IMR-90 (cell line): ENCODE measurements at regions of chr5 and their contacts with region 1.

Region 1: DNA sequence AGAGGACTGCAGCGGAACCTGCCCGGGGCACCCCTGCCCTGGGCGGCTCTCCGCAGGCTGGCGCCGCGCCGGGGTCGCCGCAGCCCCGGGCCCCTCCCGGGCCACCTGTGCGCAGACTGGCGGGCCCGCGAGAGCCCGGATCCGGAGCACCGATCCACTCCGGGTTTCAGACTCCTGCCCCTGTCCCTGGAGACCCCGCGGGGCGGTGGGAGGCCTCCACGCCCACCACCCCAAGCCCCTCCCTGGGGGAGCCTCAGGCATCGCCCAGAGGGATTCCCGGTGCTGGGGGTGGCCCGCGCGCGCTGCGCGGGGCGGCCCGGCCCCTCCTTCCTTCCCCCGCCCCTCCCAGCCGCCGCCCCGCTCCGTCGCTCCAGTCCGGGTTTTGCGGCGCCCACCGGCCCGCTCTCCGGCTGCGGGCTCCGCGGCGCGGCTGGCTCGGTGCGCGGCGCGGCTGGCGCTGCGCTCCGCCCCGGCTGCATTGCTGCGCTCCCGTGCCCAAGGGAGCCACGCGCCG is at the start of gene UNC5A:
- DNase-seq: peak; percentile 17
- ATAC-seq: peak; percentile 77
- H3K4me3 ChIP-seq: no peak within 1 kb of the TSS; the same call in 1 of the 2 replicates
- H3K27ac ChIP-seq: no peak within 1 kb of the TSS
- H3K4me1 ChIP-seq: no peaks in the 10 kb centered on the region; the same call in 1 of the 2 replicates
- H3K27me3 ChIP-seq: peaks cover 63% of the 10 kb centered on the region
- CTCF ChIP-seq: no peak
- POLR2A ChIP-seq: no peak
- RAD21 ChIP-seq: no peak
- total RNA-seq, gene UNC5A: not detected in 2 replicates

Region 2: DNA sequence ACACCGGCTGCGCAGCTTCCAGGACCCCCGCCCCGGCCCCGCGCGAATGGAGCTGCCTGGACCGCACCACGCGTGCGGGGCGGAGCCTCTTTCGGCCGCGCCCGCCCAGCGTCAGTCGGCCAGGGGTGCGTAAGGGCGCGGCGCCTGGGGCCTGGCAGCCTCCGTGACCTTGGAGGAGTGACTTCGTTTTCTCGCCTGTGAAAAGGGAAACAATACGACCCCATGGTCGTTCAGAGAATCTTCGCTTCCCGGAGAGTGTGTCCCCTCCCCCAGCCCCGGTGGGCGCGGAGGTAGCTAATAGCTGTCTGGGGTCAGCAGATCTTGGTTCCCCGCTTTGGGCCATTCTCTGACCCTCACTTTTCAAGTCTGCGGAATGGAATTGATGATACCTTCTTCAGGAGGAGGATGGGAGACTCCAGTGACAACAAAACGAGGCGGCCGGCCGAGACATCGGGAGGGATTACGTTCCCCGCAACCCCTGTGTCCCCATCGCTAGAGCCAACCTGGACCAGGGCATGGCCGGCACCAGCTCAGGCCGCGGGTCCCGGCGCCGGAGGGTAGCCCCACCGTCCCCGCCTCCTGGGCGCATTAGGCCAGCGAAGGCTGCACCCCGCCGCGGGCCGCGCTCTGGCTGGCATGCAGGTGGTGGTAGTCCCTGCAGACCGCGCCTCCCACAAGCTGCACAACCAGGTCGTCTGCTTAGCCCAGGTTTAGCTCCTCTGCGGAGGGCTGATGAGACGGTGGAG is 266.5 kb before region 1 on chr5:
- CTCF ChIA-PET with region 1: no interaction called
- POLR2A ChIA-PET with region 1: no interaction called
- dilution Hi-C with region 1: no loop called
- in situ Hi-C with region 1: no loop called
- intact Hi-C with region 1: no loop called
- DNase-seq: no peak
- ATAC-seq: peak; percentile 89
- H3K4me3 ChIP-seq: peak overlapping the region; percentile 46
- H3K27ac ChIP-seq: no peak overlapping the region
- H3K4me1 ChIP-seq: peaks cover 9% of the 10 kb centered on the region
- H3K27me3 ChIP-seq: no peaks in the 10 kb centered on the region; the same call in 1 of the 2 replicates
- CTCF ChIP-seq: no peak
- POLR2A ChIP-seq: no peak
- RAD21 ChIP-seq: no peak

Region 3: DNA sequence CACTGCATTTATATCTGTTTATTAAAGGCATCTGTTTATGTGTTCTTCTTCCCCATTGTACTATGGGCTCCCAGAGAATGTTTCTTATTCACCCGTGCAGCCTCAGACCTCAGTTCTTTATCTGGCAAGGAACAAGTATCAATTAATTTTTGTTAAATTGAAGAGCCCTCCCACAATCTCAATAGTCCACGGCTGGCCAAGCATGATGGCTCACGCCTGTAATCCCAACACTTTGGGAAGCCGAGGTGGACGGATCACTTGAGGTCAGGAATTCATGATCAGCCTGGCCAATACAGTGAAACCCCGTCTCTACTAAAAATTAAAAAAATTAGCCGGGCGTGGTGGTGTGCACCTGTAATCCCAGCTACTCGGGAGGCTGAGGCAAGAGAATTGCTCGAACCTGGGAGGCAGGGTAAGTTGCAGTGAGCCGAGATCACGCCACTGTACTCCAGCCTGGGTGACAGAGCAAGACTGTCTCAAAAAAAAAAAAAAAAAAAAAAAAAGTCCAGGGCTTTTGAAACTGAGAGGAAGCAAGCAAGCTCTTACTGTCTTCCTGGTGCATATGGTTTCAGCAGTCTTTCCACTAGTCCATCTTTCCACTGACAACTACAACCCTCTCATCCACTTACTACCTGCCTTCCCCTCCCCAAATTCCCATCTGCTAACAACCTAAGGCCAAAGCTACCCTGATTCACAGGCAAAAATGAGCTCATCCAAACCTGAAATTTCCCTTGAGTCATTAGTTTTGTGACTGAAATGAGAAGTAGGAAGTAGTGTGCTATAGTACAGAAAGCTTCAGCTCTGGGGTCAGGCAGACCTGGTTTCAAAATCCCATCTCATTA is 91.3 kb after region 1 on chr5:
- CTCF ChIA-PET with region 1: no interaction called
- POLR2A ChIA-PET with region 1: no interaction called
- dilution Hi-C with region 1: no loop called
- in situ Hi-C with region 1: no loop called
- intact Hi-C with region 1: no loop called
- DNase-seq: peak; percentile 15
- ATAC-seq: no peak
- H3K4me3 ChIP-seq: no peak overlapping the region
- H3K27ac ChIP-seq: no peak overlapping the region
- H3K4me1 ChIP-seq: no peaks in the 10 kb centered on the region
- H3K27me3 ChIP-seq: peaks cover 4% of the 10 kb centered on the region
- CTCF ChIP-seq: no peak
- POLR2A ChIP-seq: no peak
- RAD21 ChIP-seq: no peak

Region 4: GRCh38 chr5:176959051-176959450 is 148.9 kb after region 1 on chr5:
- CTCF ChIA-PET with region 1: no interaction called
- POLR2A ChIA-PET with region 1: no interaction called
- dilution Hi-C with region 1: no loop called
- in situ Hi-C with region 1: no loop called
- intact Hi-C with region 1: loop called (anchors 5 kb)
- DNase-seq: peak; percentile 29
- ATAC-seq: peak; percentile 56
- H3K4me3 ChIP-seq: no peak overlapping the region
- H3K27ac ChIP-seq: no peak overlapping the region
- H3K4me1 ChIP-seq: no peaks in the 10 kb centered on the region
- H3K27me3 ChIP-seq: no peaks in the 10 kb centered on the region
- CTCF ChIP-seq: peak; percentile 42
- POLR2A ChIP-seq: no peak
- RAD21 ChIP-seq: peak; percentile 55

Region 5: DNA sequence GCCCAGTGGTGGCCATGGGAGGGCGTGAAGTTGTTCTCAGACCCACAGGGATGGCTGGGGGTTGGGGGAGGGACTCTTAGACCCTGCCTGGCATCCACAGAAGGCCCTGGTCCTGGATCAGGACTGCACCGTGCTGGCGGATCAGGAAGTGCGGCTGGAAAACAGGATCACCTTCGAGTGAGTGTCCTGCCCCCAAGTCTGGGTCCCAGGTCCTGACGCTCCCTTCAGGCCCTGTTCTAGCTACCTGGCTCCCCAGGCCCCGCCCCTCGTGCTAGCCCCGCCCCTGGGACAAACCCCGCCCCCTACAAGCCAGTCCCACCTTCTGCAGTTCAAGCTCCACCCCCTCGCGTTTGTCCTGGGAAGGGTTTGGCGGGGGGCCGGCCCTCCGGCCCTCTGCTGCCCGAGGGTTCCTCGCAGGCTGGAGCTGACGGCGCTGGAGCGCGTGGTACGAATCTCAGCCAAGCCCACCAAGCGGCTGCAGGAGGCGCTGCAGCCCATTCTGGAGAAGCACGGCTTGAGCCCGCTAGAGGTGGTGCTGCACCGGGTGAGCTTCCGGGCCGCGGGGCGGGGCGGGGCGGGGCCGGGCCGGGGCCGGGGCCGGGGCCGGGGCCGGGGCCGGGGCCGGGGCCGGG is 560.5 kb after region 1 on chr5:
- CTCF ChIA-PET with region 1: no interaction called
- POLR2A ChIA-PET with region 1: no interaction called
- dilution Hi-C with region 1: no loop called
- in situ Hi-C with region 1: no loop called
- intact Hi-C with region 1: no loop called
- DNase-seq: peak; percentile 82
- ATAC-seq: peak; percentile 69
- H3K4me3 ChIP-seq: peak overlapping the region; percentile 19; the same call in 1 of the 2 replicates
- H3K27ac ChIP-seq: no peak overlapping the region
- H3K4me1 ChIP-seq: peaks cover 11% of the 10 kb centered on the region; the same call in 1 of the 2 replicates
- H3K27me3 ChIP-seq: peaks cover 6% of the 10 kb centered on the region; the same call in 1 of the 2 replicates
- CTCF ChIP-seq: peak; percentile 78
- POLR2A ChIP-seq: no peak
- RAD21 ChIP-seq: peak; percentile 65